ENCODE measurements at regions of chr14 and their contacts with region 1.

Region 1: DNA sequence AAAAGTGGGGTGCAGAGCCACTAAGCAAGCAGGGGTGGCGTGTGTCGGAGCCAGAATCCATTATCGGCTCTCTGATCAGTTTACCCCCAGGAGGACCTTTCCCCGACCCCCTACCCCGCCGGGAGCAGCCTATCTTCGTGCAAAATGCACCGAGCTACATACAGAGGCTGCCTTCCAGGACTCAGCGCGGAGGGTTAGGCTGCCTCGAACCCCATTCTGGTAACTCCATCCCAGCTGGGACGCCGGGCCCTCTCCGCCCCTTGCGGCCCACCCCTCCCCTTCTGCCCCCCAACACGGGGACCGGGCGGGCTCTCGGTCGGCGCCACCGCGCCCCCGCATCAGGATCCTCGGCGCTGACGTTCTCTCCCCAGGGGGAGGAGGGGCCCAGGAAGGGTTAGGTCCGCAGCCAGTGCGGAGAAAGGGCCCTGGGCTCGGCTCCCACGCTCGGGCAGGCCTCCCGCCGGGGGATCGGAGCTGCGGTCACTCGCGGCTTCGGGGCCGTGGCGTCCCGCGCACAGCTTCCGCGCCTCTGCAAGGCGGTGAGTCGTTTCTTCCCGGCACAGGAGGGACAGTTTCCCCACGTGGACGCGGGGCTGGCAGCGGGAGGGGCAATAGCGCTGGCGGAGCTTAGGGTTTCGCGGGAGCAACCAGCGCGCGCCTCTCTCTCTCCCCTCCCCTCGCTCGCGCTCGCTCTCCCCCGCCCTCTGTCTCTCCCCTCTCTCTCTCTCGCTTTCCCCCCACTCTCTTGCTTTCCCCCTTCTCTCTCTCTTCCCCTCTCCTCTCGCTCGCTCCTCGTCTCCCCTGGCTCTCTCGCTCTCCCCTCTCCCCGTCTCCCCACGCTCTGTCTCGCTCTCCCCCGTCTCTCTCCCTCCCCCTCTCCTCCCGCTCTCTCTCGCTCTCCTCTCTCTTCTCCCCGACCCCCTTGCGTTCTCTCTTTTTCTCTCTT is 12.5 kb upstream of the MAP3K9 start:
- DNase-seq: peak; percentile 35 to 55 (median 44)
- ATAC-seq: peak; percentile 27
- H3K4me3 ChIP-seq: peak overlapping the region; percentile 46 to 55
- H3K27ac ChIP-seq: no peak overlapping the region
- H3K4me1 ChIP-seq: peaks cover 20% of the 10 kb centered on the region
- H3K27me3 ChIP-seq: no peaks in the 10 kb centered on the region
- CTCF ChIP-seq: peak in 1 of 7 experiments; percentile 3
- POLR2A ChIP-seq: peak in 2 of 3 donors; percentile 12 to 20

Region 2: DNA sequence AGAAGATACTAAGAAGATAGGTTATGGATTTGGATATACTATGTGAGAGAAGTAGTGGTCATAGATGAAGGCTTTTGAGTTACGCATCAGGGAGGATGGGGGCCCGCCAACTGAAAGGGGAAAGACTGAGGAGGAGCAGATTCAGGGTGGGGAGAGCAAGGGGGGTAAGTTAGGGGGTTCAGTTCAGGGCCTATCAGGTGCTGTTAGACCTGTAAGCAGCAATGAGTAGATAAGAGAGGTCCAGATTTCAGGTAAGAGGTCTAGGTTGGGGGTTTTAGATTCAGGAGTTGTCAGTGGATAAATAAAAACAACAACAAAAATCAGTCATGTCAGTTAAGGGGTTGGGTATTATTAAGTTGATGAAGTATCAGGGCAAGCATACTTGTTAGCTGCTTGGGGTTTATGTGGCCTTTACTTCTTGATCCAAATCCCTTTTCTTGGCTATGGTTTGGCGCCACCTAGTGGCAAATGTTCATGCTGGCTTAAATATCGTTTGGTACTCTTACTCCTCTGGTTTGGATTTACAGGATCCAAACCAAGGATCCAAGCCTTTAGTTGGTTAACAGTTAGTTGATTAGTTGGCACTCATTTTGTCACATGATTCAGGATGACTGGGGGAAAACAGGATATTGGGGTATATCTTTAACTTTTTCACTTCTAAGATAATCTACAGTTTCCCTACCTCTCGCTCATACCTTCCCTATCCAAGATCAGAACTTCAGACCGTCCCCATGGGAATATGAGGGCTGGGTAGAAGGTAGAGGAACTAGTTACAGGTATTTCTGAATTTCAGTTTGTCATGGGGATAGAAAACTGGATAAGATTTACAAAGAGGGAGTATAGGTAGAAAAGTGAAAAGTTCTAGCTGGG is 150.5 kb after region 1 on chr14:
- intact Hi-C with region 1: loop called (anchors 10 kb)
- DNase-seq: peak; percentile 84 to 90 (median 88)
- ATAC-seq: peak; percentile 70
- H3K4me3 ChIP-seq: no peak overlapping the region
- H3K27ac ChIP-seq: no peak overlapping the region
- H3K4me1 ChIP-seq: no peaks in the 10 kb centered on the region
- H3K27me3 ChIP-seq: no peaks in the 10 kb centered on the region
- CTCF ChIP-seq: peak; percentile 67 to 97 (median 91)
- POLR2A ChIP-seq: no peak

Region 3: DNA sequence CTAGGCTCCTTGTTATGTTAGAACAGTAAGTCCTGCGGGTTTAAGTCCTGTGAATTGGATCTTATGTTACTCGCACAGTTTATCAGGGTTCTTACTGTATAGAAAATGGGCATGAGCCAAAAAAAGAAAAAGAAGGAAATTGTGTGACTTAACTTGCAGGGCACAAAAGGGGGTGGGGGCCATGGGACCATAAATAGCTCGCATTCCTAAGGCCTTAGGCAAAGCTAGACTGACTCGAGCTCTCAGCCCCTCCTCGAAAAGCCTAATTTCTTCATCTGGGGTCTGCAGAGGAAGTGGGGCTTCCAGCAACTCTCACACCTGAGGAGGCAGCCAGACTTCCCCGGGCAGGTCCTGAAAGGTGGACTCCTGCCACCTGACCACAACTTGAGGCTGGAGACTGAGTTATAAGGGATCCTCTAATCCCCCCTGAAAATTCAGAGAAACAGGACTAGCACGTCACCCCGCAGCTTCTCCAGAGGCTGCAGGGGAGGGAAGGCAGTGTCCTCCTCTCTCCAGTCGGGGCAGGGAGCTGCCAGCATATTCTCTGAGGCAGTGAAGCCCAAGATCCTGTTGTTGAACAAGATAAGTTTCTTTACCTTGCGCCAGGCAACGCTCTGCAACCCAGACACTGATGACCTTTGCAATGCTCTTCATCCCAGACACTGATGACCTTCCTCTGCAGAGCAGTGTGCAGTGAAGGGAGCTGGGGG is 365.9 kb after region 1 on chr14:
- intact Hi-C with region 1: no loop called
- DNase-seq: peak in 3 of 4 donors; percentile 18 to 22 (median 19)
- ATAC-seq: peak; percentile 82
- H3K4me3 ChIP-seq: no peak overlapping the region
- H3K27ac ChIP-seq: peak overlapping the region in 2 of 4 donors; percentile 65 to 79
- H3K4me1 ChIP-seq: peaks cover 10% of the 10 kb centered on the region
- H3K27me3 ChIP-seq: no peaks in the 10 kb centered on the region
- CTCF ChIP-seq: no peak
- POLR2A ChIP-seq: no peak